Activated naive CD8-positive, alpha-beta T cell treated with anti-CD3 and anti-CD28 coated beads, Interleukin-2, amount 10 ng/mL, durations not matched to agents 7 days and 5 days (primary cell): ENCODE measurements at regions of chr15 and their contacts with region 1.

Region 1: GRCh38 chr15:88620995-88621772 is at the start of gene AEN:
- DNase-seq: peak; percentile 95
- ATAC-seq: peak; percentile 85
- H3K4me3 Mint-ChIP-seq: peak within 1 kb of the TSS; percentile 97
- H3K27ac Mint-ChIP-seq: peak within 1 kb of the TSS; percentile 96
- H3K4me1 Mint-ChIP-seq: peaks cover 34% of the 10 kb centered on the region
- H3K27me3 Mint-ChIP-seq: no peaks in the 10 kb centered on the region
- total RNA-seq, gene AEN: 38.2 to 42.5 TPM

Region 2: GRCh38 chr15:88605189-88606069 is 15.8 kb before region 1 on chr15:
- POLR2A ChIA-PET with region 1: no interaction called
- DNase-seq: peak; percentile 73
- ATAC-seq: no peak
- H3K4me3 Mint-ChIP-seq: no peak overlapping the region
- H3K27ac Mint-ChIP-seq: no peak overlapping the region
- H3K4me1 Mint-ChIP-seq: peaks cover 1% of the 10 kb centered on the region
- H3K27me3 Mint-ChIP-seq: peaks cover 73% of the 10 kb centered on the region

Region 3: GRCh38 chr15:88635318-88635717 is 14.1 kb after region 1 on chr15:
- POLR2A ChIA-PET with region 1: interaction called, 21 read pairs
- DNase-seq: no peak
- ATAC-seq: peak; percentile 25
- H3K4me3 Mint-ChIP-seq: peak overlapping the region; percentile 98
- H3K27ac Mint-ChIP-seq: peak overlapping the region; percentile 100
- H3K4me1 Mint-ChIP-seq: peaks cover 60% of the 10 kb centered on the region
- H3K27me3 Mint-ChIP-seq: no peaks in the 10 kb centered on the region

Region 4: GRCh38 chr15:88648357-88649214 is 27.4 kb after region 1 on chr15:
- POLR2A ChIA-PET with region 1: interaction called, 17 read pairs
- DNase-seq: no peak
- ATAC-seq: no peak
- H3K4me3 Mint-ChIP-seq: peak overlapping the region; percentile 79
- H3K27ac Mint-ChIP-seq: peak overlapping the region; percentile 90
- H3K4me1 Mint-ChIP-seq: peaks cover 67% of the 10 kb centered on the region
- H3K27me3 Mint-ChIP-seq: no peaks in the 10 kb centered on the region

Region 5: GRCh38 chr15:88664151-88664778 is 43.1 kb after region 1 on chr15:
- POLR2A ChIA-PET with region 1: interaction called, 11 read pairs
- DNase-seq: no peak
- ATAC-seq: peak; percentile 70
- H3K4me3 Mint-ChIP-seq: no peak overlapping the region
- H3K27ac Mint-ChIP-seq: no peak overlapping the region
- H3K4me1 Mint-ChIP-seq: peaks cover 5% of the 10 kb centered on the region
- H3K27me3 Mint-ChIP-seq: peaks cover 5% of the 10 kb centered on the region

Region 6: GRCh38 chr15:88714782-88715372 is 93.7 kb after region 1 on chr15:
- POLR2A ChIA-PET with region 1: no interaction called
- DNase-seq: no peak
- ATAC-seq: no peak
- H3K4me3 Mint-ChIP-seq: no peak overlapping the region
- H3K27ac Mint-ChIP-seq: no peak overlapping the region
- H3K4me1 Mint-ChIP-seq: no peaks in the 10 kb centered on the region
- H3K27me3 Mint-ChIP-seq: peaks cover 13% of the 10 kb centered on the region